RWPE1 (cell line): ENCODE measurements at regions of chr2 and their contacts with region 1.

Region 1: DNA sequence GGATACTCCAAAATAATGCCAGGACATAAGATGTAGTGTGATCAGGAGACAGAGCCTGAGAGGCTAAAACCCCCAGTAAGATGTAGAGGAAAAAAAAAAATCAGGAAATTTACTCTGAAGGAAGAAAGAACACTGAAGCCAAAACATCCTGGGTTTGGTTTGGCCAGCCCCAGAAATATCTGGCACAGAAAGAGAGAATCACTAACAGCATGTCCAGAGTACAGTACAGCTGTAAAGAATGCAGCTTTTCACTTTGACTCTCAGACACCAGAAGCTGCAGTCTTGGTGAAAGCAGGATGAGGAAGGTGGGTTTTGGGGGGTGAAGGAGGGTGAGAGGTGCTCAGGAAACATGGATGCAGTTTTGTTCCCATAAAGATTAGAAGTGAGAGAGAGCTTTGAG is 1577.7 kb upstream of the ACVR2A start:
- DNase-seq: no peak
- H3K27ac ChIP-seq: no peak overlapping the region
- CTCF ChIP-seq: no peak

Region 2: DNA sequence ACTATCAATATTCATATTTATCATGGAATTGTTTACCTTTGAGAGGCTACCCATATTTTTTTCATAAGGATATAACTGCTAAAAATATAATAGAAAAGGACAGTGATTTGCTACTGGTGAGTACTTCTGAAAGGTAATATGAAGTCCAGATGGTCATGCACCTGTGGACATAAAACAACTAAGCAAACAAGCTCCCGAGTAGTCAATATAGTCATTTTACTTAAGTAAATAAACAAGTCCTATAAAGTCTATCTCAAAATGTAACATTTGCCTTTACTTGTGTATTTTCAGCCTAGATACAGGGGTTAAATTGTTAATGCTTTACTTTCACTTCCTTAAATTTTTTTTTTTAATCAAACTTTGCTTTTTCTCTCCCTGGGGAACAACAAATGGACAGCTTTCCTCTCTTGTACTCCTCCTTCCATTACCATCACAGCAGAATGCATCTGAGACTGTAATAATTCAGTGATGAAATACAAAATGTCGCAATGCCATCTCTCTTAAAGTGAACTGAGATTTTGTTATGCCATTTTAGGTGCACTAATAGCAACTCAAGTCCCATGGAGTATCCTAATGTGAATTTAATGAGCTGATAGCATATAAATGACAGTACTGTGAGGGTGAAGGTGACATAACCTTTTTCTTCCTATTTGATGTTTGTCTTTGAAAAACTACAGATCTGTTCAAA is 421.7 kb before region 1 on chr2:
- CTCF ChIA-PET with region 1: no interaction called
- POLR2A ChIA-PET with region 1: no interaction called
- DNase-seq: no peak
- H3K27ac ChIP-seq: no peak overlapping the region
- CTCF ChIP-seq: no peak

Region 3: DNA sequence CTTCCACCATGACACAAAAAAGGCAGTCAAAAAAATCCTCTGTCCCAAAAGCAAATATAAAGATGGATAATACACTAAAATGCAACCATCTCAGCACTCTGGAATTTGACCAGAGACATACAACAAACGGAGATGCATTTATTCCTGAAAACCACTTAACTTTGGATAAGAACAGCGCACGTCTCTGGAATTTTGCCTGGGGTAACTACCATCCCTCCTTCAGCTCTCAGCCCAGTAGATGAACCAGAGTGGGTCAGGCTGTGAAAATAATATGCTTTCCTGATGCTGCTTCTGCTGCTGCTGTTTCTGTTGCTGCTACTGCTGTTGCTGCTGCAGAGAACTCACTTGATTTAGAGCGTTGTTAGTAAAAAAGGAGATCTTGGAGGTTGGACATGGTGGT is 1443.9 kb after region 1 on chr2:
- CTCF ChIA-PET with region 1: interaction called, 11 read pairs
- POLR2A ChIA-PET with region 1: no interaction called
- DNase-seq: no peak
- H3K27ac ChIP-seq: no peak overlapping the region
- CTCF ChIP-seq: no peak